PC-9 (cell line): ENCODE measurements at regions of chr3 and their contacts with region 1.

Region 1: DNA sequence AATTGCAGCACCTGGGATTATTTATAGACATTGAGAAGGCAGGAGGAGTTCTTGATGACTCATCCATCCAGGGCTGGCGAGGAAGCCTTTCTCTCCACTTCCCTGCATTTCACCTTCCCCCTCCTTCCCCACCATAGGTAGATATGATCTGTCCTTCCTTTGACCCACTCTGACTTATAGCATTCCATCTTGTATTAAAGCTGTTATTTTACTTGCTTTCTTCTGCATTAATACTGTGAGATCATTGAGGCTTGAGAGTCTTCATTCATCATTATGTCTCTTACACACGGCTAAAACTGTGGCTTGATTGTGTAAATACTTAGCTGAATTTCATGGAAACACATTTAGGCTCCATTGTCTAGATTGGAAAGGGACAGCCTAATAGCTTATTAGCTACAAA is 288.8 kb downstream of the FEZF2 start:
- DNase-seq: peak; percentile 37 to 72
- H3K4me3 ChIP-seq: no peak overlapping the region
- H3K27ac ChIP-seq: peak overlapping the region; percentile 42
- H3K4me1 ChIP-seq: peaks cover 17% of the 10 kb centered on the region
- H3K27me3 ChIP-seq: no peaks in the 10 kb centered on the region
- CTCF ChIP-seq: no peak

Region 2: DNA sequence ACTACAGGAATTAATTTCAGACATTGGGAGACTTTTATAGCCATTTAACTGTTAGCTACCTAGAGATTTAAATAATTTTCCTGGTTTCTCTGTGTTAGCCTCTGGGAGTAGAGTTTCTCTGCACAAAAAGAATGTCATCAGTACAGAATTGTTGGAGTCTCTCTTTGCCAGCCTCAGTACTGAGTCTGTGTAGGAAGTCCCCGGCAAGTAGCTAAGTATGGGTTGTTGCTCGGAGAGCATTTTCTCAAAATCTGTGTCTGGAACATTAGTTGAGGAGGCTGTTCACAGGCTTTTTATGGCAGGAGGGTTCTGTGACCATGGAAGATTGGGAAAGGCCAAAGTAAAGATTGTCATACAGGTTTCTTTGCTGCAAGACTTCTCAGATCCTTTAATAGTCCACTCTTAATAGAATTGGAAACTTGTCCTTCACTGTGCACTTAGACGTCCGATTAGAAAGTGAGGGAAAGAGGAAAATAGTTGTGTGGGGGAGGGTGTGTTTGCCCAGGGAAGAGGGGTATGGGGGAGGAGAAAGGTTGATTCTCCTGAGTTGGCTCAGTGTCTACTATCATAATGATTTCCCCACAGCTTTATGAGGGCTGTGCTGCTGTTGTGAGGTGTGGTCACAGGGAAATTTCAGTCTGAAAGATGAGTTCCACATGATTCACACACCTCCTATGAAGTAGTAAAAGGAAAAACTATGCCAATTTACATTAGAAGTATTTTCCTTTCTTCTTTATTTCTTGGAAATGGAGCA is 316.1 kb before region 1 on chr3:
- CTCF ChIA-PET with region 1: no interaction called
- POLR2A ChIA-PET with region 1: no interaction called
- intact Hi-C with region 1: no loop called
- DNase-seq: no peak
- H3K4me3 ChIP-seq: no peak overlapping the region
- H3K27ac ChIP-seq: no peak overlapping the region
- H3K4me1 ChIP-seq: no peaks in the 10 kb centered on the region
- H3K27me3 ChIP-seq: no peaks in the 10 kb centered on the region
- CTCF ChIP-seq: no peak

Region 3: DNA sequence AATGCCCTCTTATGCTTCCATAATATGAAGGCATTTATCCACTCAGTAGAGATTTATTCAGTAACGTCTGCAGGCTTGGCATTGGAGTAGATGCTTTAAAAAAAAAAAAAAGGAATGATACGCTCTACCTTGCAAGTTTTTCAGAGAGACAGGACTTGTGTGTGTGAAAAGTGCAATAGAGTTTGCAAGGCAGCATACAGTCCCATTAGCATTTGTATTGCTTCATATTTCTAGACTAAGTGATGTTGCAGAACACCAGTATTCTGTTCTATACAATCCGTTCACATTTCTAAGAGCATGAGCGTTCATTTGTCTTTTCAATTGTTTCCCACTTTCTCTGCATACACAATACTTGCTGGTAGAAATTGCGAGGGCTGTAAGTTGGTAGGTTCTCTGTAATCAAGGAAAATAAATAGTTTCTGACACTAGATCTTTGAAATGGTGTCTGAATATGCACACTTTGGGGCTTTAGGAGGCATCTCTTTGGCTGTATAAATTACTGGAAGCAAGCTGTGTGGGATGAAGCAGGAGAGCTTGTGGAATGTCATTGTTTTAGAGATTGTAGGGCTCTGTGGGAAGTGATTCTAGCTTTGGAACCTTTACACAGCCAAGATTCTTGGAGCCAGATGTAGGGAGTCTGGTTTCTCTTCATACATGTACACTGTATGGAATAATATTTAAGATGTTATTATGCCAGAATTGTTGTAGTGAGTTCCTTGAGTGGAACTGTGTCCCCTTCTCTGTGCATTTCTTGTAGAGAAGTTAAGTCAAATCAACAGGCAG is 26.0 kb after region 1 on chr3:
- CTCF ChIA-PET with region 1: interaction called, 14 read pairs
- POLR2A ChIA-PET with region 1: no interaction called
- intact Hi-C with region 1: no loop called
- DNase-seq: no peak
- H3K4me3 ChIP-seq: no peak overlapping the region
- H3K27ac ChIP-seq: no peak overlapping the region
- H3K4me1 ChIP-seq: no peaks in the 10 kb centered on the region
- H3K27me3 ChIP-seq: no peaks in the 10 kb centered on the region
- CTCF ChIP-seq: no peak

Region 4: GRCh38 chr3:63565220-63565619 is 1480.6 kb after region 1 on chr3:
- CTCF ChIA-PET with region 1: no interaction called
- POLR2A ChIA-PET with region 1: no interaction called
- intact Hi-C with region 1: no loop called
- DNase-seq: no peak
- H3K4me3 ChIP-seq: no peak overlapping the region
- H3K27ac ChIP-seq: no peak overlapping the region
- H3K4me1 ChIP-seq: no peaks in the 10 kb centered on the region
- H3K27me3 ChIP-seq: no peaks in the 10 kb centered on the region
- CTCF ChIP-seq: no peak